ENCODE measurements at regions of chr14 and their contacts with region 1.

Region 1: GRCh38 chr14:90438851-90439250 is 42.0 kb downstream of the CALM1 start:
- DNase-seq: no peak
- ATAC-seq: no peak
- H3K4me3 ChIP-seq: no peak overlapping the region
- H3K27ac ChIP-seq: no peak overlapping the region
- H3K4me1 ChIP-seq: peaks cover 10% of the 10 kb centered on the region
- H3K27me3 ChIP-seq: no peaks in the 10 kb centered on the region
- CTCF ChIP-seq: no peak

Region 2: GRCh38 chr14:89702073-89702875 is 736.6 kb before region 1 on chr14:
- intact Hi-C with region 1: no loop called
- DNase-seq: peak; percentile 36 to 55
- ATAC-seq: peak; percentile 29 to 60 (median 38)
- H3K4me3 ChIP-seq: peak overlapping the region; percentile 82
- H3K27ac ChIP-seq: peak overlapping the region; percentile 72
- H3K4me1 ChIP-seq: peaks cover 4% of the 10 kb centered on the region
- H3K27me3 ChIP-seq: no peaks in the 10 kb centered on the region
- CTCF ChIP-seq: no peak

Region 3: GRCh38 chr14:90491221-90491885 is 52.5 kb after region 1 on chr14:
- intact Hi-C with region 1: loop called in 1 of 2 experiments (anchors 5 kb)
- DNase-seq: peak; percentile 73 to 83
- ATAC-seq: peak; percentile 30 to 65 (median 47)
- H3K4me3 ChIP-seq: no peak overlapping the region
- H3K27ac ChIP-seq: no peak overlapping the region
- H3K4me1 ChIP-seq: no peaks in the 10 kb centered on the region
- H3K27me3 ChIP-seq: no peaks in the 10 kb centered on the region
- CTCF ChIP-seq: no peak

Measured in psoas muscle (tissue), 8 donors.